ENCODE measurements at regions of chr15 and their contacts with region 1.

Region 1: DNA sequence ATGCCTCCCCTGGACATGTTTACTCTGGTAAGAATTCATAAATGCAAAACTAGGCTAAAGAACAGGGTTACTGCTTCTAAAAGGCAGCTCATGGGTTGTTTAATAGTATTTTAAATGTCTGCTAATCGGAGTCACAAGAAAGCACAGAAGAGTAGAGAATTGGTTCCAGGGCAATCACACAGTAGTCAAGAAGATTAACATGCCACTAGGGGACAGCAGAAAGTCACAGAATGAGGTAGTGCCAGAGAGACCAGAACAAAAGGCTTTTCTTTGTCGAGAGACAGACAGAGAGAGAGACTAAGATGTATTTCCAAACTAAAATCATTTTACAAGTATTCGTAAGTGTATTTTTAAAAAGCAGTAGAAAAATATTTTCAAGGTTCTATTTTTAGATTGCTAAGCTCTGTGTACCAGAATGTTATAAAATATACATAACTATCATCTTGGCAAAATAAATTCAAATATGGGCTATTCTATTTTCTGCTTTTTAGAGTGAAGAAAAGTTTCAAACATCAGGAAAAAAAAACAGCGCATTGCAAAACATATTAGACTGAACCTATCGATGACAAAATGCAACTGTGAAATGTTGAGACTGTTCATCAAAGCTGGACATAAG is 78.3 kb upstream of the CDIN1 start:
- DNase-seq: peak; percentile 12
- H3K4me3 ChIP-seq: no peak overlapping the region
- CTCF ChIP-seq: peak; percentile 59

Region 2: DNA sequence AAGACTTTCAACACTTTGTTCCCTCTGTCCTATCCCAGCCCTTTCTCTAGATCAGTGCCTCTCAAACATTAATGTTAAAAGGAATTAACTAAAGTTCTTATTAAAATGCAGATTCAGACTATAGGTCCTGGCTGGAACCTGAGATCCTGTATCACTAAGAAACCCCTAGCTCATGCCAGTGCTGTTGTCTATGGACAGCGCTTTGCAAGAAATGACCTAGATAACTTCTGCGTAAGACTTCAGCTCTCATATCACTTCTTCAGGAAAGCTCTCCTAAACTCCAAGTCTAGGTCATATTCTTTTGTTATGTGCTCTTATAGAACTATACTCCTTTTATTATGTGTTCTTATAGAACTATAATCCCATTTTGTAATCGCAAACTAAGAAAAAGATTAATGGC is 10.4 kb after region 1 on chr15:
- CTCF ChIA-PET with region 1: interaction called, 26 read pairs
- POLR2A ChIA-PET with region 1: no interaction called
- DNase-seq: no peak
- H3K4me3 ChIP-seq: no peak overlapping the region
- CTCF ChIP-seq: no peak

Region 3: GRCh38 chr15:36863570-36863969 is 362.4 kb after region 1 on chr15:
- CTCF ChIA-PET with region 1: no interaction called
- POLR2A ChIA-PET with region 1: no interaction called
- DNase-seq: no peak
- H3K4me3 ChIP-seq: no peak overlapping the region
- CTCF ChIP-seq: no peak

Measured in AG04449 (cell line).